B cell (primary cell): ENCODE measurements at regions of chr5 and their contacts with region 1.

Region 1: GRCh38 chr5:89179731-89180130 is 296.7 kb upstream of the MEF2C start:
- DNase-seq: no peak
- ATAC-seq: no peak
- H3K4me3 ChIP-seq: no peak overlapping the region
- H3K4me3 Mint-ChIP-seq: no peak overlapping the region
- H3K27ac ChIP-seq: no peak overlapping the region
- H3K27ac Mint-ChIP-seq: no peak overlapping the region
- H3K4me1 ChIP-seq: no peaks in the 10 kb centered on the region
- H3K4me1 Mint-ChIP-seq: no peaks in the 10 kb centered on the region
- H3K27me3 ChIP-seq: no peaks in the 10 kb centered on the region
- H3K27me3 Mint-ChIP-seq: no peaks in the 10 kb centered on the region
- CTCF ChIP-seq: no peak

Region 2: DNA sequence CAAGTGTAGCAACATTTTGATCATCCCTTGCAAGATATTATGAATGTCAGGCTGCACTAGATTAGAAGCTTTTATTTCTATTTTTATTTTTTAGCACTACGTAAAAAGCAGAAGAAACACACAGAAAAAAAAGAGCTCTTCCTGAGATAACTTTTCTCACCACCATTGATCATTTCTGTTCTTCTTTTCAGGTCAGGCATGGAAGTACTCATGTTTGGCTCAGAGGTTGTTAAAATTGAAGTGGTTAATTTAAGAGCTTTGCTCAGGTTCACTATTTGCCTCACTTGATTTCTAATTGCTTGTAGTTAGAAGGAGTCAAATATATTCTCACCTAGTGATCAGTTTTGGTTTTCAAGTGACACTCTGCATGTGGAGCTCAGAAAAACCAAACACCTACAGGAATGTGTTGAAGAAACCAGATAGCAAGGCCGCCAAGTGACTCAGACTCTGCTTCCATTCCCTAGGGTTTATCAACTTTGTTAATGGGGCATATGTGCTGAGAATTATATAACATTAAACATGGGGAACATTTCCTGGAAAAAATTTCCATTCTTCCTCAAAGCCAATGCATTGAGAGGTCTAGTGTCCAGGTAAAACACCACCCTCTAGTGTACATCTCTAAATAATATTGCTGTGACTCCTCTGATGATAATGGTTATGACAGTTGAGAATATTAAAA is 550.0 kb after region 1 on chr5:
- CTCF ChIA-PET with region 1: no interaction called
- POLR2A ChIA-PET with region 1: no interaction called
- intact Hi-C with region 1: loop called (anchors 10 kb)
- DNase-seq: peak; percentile 26
- ATAC-seq: peak; percentile 17
- H3K4me3 ChIP-seq: no peak overlapping the region
- H3K4me3 Mint-ChIP-seq: peak overlapping the region; percentile 14
- H3K27ac ChIP-seq: peak overlapping the region in 1 of 2 donors; percentile 31
- H3K27ac Mint-ChIP-seq: peak overlapping the region; percentile 16
- H3K4me1 ChIP-seq: peaks cover 22 to 27% of the 10 kb centered on the region in 2 donors
- H3K4me1 Mint-ChIP-seq: peaks cover 27% of the 10 kb centered on the region
- H3K27me3 ChIP-seq: no peaks in the 10 kb centered on the region
- H3K27me3 Mint-ChIP-seq: no peaks in the 10 kb centered on the region
- CTCF ChIP-seq: no peak